PC-9 (cell line): ENCODE measurements at regions of chr10 and their contacts with region 1.

Region 1: GRCh38 chr10:101818119-101818871 is at the start of gene OGA:
- DNase-seq: peak; percentile 94 to 95
- H3K4me3 ChIP-seq: peak within 1 kb of the TSS; percentile 77
- H3K27ac ChIP-seq: peak within 1 kb of the TSS; percentile 73
- H3K4me1 ChIP-seq: peaks cover 28% of the 10 kb centered on the region
- H3K27me3 ChIP-seq: no peaks in the 10 kb centered on the region
- CTCF ChIP-seq: no peak
- total RNA-seq, gene OGA: 79.8 and 82.0 TPM in 2 replicates

Region 2: DNA sequence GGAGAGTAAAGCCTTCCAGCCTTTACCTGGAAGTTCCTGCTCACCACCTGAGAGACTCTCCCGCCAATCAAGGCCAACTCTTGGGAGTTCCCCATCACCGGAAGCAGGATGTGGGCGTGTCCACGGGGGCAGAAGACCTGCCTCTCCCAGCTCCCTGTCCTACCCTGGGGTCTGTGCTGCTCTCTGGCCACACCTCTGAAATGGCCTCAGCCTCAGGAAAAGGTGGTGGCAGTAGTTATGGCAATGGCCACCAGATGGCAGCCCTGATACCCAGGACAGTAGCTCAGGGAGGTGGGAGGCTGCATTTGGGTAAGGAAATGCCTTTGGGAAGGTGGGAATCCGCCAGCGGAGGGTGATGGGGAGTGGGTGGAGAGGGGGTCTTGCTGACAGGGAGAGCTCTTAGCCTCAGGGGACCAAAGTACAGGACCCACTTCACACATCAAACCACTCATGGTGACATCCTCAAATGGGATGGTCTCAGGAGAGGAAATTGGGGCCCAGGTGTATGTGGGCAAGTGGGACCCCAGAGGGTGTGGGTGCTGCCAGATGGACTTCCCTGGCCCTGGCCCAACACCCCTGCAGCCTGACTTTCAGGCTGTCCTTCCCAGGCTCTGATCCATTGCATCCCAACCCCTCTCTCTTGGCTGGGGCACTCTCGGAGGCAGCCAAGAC is 722.6 kb before region 1 on chr10:
- CTCF ChIA-PET with region 1: no interaction called
- POLR2A ChIA-PET with region 1: interaction called, 13 read pairs
- intact Hi-C with region 1: no loop called
- DNase-seq: peak; percentile 55 to 68
- H3K4me3 ChIP-seq: no peak overlapping the region
- H3K27ac ChIP-seq: no peak overlapping the region
- H3K4me1 ChIP-seq: no peaks in the 10 kb centered on the region
- H3K27me3 ChIP-seq: peaks cover 38% of the 10 kb centered on the region
- CTCF ChIP-seq: peak; percentile 79

Region 3: DNA sequence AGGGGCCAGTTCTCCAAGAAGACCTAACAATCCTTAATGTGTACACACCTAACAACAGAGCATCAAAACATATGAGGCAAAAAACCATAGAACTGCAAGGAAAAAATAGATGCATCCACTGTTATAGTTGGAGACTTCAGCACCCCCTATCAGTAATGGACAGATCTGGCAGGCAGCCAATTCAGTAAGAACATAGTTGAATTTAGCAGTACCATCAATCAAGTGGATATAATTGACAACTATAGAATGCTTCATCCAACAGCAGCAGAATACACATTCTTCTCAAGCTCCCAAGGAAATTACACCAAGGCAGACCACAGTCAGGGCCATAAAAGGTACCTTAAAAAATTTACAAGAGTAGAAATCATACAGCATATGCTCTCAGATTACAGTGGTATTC is 272.4 kb before region 1 on chr10:
- CTCF ChIA-PET with region 1: interaction called, 16 read pairs
- POLR2A ChIA-PET with region 1: no interaction called
- intact Hi-C with region 1: no loop called
- DNase-seq: no peak
- H3K4me3 ChIP-seq: no peak overlapping the region
- H3K27ac ChIP-seq: no peak overlapping the region
- H3K4me1 ChIP-seq: no peaks in the 10 kb centered on the region
- H3K27me3 ChIP-seq: no peaks in the 10 kb centered on the region
- CTCF ChIP-seq: no peak

Region 4: DNA sequence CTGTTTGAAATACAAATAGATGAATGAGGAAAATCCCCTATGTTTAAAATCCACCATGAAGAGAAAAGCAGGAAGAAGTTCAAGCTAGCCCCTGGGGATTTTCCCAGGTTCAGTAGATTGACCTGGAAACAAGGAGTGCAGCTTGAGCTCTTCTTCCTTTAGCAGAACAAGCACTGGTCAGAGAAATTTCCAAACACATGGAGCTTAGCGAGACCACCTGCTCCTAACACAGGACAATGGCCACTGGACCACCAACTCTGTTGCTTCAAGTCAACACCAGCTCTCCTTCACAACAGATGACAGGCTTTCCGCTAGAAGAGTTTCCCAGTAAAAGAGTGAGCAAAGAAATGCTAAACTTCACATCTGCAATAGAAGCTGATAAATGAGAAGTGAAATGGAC is 114.0 kb before region 1 on chr10:
- CTCF ChIA-PET with region 1: no interaction called
- POLR2A ChIA-PET with region 1: no interaction called
- intact Hi-C with region 1: no loop called
- DNase-seq: no peak
- H3K4me3 ChIP-seq: no peak overlapping the region
- H3K27ac ChIP-seq: no peak overlapping the region
- H3K4me1 ChIP-seq: no peaks in the 10 kb centered on the region
- H3K27me3 ChIP-seq: no peaks in the 10 kb centered on the region
- CTCF ChIP-seq: no peak

Region 5: DNA sequence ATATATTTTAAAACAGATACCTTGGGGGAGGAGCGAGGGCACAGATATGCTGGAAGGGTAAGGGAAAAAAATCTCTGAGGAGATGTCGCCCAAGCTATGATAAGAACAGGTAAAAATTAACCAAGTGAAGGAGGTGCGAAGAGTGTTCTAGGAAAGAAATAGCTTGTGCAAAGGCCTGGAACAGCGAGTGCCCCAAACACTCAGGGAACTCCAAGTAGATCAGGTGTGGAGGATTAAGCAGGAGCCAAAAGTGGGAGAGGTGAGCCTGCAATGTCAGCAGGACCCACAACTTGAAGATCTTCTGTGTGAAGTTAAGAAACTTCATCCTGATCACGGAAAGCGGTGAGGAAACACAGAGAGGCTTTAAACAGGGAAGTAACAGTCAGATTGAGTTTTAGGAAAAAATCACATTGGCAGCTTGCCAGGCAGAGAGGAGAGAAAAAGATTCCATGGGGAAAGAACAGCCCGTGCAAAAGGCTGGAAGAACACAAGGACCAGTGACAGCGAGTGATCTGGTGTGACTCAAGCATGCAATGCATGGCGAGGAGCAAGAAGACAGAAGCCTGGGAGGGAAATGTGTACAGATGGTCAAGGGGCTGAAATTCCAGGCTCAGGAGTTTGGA is 73.1 kb before region 1 on chr10:
- CTCF ChIA-PET with region 1: no interaction called
- POLR2A ChIA-PET with region 1: no interaction called
- intact Hi-C with region 1: no loop called
- DNase-seq: no peak
- H3K4me3 ChIP-seq: no peak overlapping the region
- H3K27ac ChIP-seq: no peak overlapping the region
- H3K4me1 ChIP-seq: no peaks in the 10 kb centered on the region
- H3K27me3 ChIP-seq: no peaks in the 10 kb centered on the region
- CTCF ChIP-seq: no peak

Region 6: DNA sequence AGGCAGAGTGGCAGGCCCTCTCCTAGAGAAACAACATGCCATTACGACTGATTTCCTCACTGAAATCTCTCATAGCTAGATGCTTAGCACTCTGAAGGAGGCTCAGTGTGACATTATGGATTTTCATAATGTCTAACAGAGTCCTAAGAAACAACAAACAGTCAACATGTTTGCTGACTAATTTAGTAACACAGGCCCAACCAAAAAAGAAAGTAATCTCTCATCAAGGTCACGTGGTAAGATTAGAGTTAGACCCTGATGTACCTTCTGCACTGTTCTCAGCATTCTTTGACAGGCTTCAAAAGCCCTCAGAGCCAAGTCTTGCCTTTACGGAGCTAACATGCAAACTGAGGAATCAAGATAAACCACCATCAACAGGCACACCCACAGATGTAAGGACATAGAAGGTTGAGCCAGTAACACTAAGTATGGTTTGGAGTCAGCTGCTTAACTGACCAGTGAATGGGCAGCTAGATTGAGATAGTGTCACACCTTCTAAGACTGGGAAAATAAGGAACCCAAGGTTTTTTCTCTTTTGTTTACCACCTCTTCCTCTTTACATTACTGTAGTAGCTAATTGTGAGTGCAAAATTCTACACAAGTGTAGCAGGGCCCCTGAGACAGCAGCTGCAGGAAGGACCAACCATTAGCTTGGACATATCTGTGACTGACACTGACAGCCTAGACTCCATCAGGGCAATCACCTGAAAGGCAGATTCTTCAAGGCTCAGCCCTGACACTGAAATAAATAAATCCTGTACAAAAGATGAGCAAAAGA is 40.6 kb after region 1 on chr10:
- CTCF ChIA-PET with region 1: no interaction called
- POLR2A ChIA-PET with region 1: no interaction called
- intact Hi-C with region 1: no loop called
- DNase-seq: no peak
- H3K4me3 ChIP-seq: no peak overlapping the region
- H3K27ac ChIP-seq: no peak overlapping the region
- H3K4me1 ChIP-seq: no peaks in the 10 kb centered on the region
- H3K27me3 ChIP-seq: no peaks in the 10 kb centered on the region
- CTCF ChIP-seq: no peak

Region 7: DNA sequence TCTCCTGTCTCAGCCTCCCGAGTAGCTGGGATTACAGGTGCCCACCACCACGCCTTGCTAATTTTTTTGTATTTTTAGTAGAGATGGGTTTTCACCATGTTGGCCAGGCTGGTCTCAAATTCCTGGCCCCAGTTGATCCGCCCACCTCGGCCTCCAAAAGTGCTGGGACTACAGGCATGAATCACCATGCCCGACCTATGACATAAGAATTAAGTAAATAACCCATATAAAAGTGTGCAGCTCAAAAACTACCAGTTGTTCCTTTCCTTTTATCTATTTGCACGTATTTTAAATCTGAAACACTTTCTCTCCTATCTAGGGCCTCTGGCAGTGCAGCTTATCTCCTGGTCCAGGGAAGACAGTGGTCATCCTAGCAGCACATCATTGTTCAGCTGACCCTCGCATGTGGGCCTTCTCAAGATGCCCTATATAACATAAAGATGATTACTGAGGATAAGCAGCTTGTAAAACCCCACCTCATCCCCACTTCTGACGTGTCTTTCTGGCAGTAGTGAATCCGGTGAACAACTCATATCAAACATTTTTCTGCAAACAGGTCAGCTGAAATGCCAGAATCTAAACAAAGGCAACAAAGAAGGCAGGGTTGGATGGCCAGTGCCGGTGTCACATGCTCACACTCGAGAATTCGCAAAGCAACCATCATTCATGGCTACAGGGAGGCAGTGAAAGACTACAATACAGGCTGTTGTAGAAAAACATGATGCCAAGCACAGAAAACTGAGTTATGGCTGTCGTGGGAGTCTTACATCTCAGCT is 61.3 kb after region 1 on chr10:
- CTCF ChIA-PET with region 1: no interaction called
- POLR2A ChIA-PET with region 1: no interaction called
- intact Hi-C with region 1: no loop called
- DNase-seq: peak in 1 of 2 experiments; percentile 6
- H3K4me3 ChIP-seq: no peak overlapping the region
- H3K27ac ChIP-seq: peak overlapping the region; percentile 52
- H3K4me1 ChIP-seq: peaks cover 22% of the 10 kb centered on the region; the same call in 1 of the 2 replicates
- H3K27me3 ChIP-seq: no peaks in the 10 kb centered on the region
- CTCF ChIP-seq: no peak

Region 8: DNA sequence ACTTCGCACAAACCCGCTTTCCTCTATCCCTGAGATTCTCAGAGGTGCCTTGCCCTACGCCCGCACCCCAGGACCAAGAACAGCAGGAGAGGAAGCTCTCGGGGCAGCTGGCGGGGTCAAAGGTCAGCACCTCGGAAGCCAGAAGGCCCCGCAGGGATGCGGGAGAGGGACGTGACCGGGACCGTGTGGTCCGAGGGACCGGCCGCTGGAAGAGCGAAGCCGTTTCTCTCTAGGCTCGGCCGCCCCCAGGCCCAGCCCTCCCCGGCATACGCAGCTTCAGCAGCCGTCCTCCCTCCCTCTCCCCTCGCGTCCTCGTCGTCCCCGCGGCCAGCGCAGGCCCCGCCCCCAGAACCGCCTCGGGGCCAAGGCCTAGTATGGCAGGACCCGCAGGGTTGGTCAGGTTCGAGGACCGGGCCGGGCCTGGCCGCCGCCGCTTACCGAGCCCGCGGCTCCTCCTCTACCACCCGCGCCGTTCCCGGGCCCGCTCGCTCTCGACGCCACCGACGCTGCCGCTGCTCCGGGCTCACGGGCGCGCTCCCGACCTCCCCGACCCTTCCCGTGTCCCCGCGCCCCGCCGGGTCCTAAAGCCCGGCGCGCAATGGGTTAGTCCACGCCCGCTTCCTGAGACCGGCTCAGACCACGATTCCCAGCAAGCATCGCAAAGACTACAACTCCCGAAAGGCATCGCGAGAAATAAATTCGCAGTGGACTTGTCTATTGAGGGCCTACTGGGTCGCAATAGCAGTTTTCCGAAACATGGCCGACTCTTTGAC is 237.5 kb after region 1 on chr10 and contains the start of gene ARMH3:
- CTCF ChIA-PET with region 1: no interaction called
- POLR2A ChIA-PET with region 1: no interaction called
- intact Hi-C with region 1: loop called (anchors 2 kb)
- DNase-seq: peak; percentile 86 to 87
- H3K4me3 ChIP-seq: peak within 1 kb of the TSS; percentile 84
- H3K27ac ChIP-seq: 0 out of 2 replicates have a peak within 1 kb of the TSS, but pooled peaks have one; percentile 19
- H3K4me1 ChIP-seq: 0 out of 2 replicates have a peak, but pooled peaks cover 7% of the 10 kb centered on the region
- H3K27me3 ChIP-seq: no peaks in the 10 kb centered on the region
- CTCF ChIP-seq: no peak
- total RNA-seq, gene ARMH3: 12.0 and 12.8 TPM in 2 replicates